Panc1 (cell line): ENCODE measurements at regions of chr3 and their contacts with region 1.

Region 1: GRCh38 chr3:182618085-182618732 is 175.1 kb upstream of the ATP11B start:
- DNase-seq: peak; percentile 10
- ATAC-seq: 0 out of 2 replicates have a peak, but pooled peaks have one; percentile 63
- H3K4me3 ChIP-seq: no peak overlapping the region
- H3K27ac ChIP-seq: no peak overlapping the region
- H3K4me1 ChIP-seq: no peaks in the 10 kb centered on the region
- H3K27me3 ChIP-seq: peaks cover 9% of the 10 kb centered on the region
- CTCF ChIP-seq: peak; percentile 68

Region 2: DNA sequence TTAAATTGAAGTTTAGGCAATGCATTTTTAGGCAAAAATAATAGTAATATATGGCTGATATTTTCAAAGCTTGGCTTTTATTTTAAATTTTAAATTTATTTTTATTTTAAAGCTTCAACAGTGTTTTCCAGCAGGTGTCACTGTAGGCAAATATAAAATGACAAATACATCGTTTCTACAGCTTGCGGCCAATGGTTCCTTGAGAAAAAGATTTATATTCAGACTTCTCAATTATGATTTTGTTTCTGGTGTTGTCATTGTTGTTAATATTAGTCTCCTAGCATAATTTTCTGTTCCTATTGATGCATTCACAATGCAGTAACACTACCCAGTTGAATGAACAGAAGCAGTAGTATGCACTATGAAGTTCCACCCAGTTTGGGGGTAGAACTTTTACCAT is 1407.9 kb before region 1 on chr3:
- CTCF ChIA-PET with region 1: no interaction called
- POLR2A ChIA-PET with region 1: no interaction called
- in situ Hi-C with region 1: no loop called
- intact Hi-C with region 1: loop called (anchors 5 kb)
- DNase-seq: no peak
- ATAC-seq: no peak
- H3K4me3 ChIP-seq: no peak overlapping the region
- H3K27ac ChIP-seq: no peak overlapping the region
- H3K4me1 ChIP-seq: no peaks in the 10 kb centered on the region
- H3K27me3 ChIP-seq: peaks cover 5% of the 10 kb centered on the region; the same call in 1 of the 2 replicates
- CTCF ChIP-seq: peak; percentile 48; the same call in 1 of the 2 replicates

Region 3: DNA sequence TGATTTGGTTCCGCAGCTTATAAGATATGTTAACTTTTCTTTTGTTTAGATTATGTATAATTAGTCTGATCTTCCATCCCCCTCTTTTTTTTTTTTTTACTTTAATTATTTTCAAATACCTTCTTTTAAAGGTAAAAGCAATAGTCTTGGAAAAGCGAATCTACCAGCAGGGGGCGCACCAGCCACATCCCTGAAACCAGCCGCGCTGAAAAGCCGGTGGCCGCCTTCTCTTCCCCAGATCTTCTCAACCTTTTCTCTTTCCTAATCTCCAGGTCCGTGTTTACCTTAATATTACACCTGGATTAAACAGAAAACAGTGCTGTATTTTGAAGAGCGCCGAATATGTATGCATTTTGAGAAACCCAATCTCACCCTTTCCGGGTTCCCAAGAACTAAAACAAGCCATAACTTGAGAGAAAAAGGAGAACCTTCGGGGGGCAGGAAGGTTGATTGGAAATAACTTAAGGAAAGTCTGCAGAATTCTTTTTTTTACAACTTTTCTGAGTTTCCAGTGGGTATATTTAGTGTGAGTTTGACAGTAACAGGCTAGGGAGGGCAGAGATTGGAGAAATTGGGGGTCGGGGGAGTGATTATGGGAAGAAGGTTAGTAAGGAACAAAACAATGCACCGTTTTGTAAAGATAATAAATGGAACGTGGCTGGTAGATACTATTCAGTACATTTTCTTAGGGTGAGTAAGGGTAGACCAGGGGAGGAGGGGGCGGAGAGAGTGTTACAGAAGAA is 908.5 kb before region 1 on chr3:
- CTCF ChIA-PET with region 1: no interaction called
- POLR2A ChIA-PET with region 1: no interaction called
- in situ Hi-C with region 1: no loop called
- intact Hi-C with region 1: loop called (anchors 2 kb)
- DNase-seq: no peak
- ATAC-seq: no peak
- H3K4me3 ChIP-seq: peak overlapping the region in 1 of 2 experiments; percentile 34; a peak in 2 of 4 replicates
- H3K27ac ChIP-seq: no peak overlapping the region
- H3K4me1 ChIP-seq: peaks cover 4% of the 10 kb centered on the region; the same call in 1 of the 2 replicates
- H3K27me3 ChIP-seq: peaks cover 40% of the 10 kb centered on the region
- CTCF ChIP-seq: peak; percentile 95

Region 4: GRCh38 chr3:182802413-182803390 is 184.5 kb after region 1 on chr3:
- CTCF ChIA-PET with region 1: no interaction called
- POLR2A ChIA-PET with region 1: no interaction called
- in situ Hi-C with region 1: no loop called
- intact Hi-C with region 1: no loop called
- DNase-seq: no peak
- ATAC-seq: peak; percentile 45; the same call in 1 of the 2 replicates
- H3K4me3 ChIP-seq: no peak overlapping the region
- H3K27ac ChIP-seq: no peak overlapping the region
- H3K4me1 ChIP-seq: peaks cover 6% of the 10 kb centered on the region
- H3K27me3 ChIP-seq: no peaks in the 10 kb centered on the region
- CTCF ChIP-seq: no peak

Region 5: GRCh38 chr3:182889948-182890629 is 271.9 kb after region 1 on chr3:
- CTCF ChIA-PET with region 1: no interaction called
- POLR2A ChIA-PET with region 1: no interaction called
- in situ Hi-C with region 1: no loop called
- intact Hi-C with region 1: no loop called
- DNase-seq: no peak
- ATAC-seq: peak; percentile 38; the same call in 1 of the 2 replicates
- H3K4me3 ChIP-seq: no peak overlapping the region
- H3K27ac ChIP-seq: no peak overlapping the region
- H3K4me1 ChIP-seq: no peaks in the 10 kb centered on the region
- H3K27me3 ChIP-seq: no peaks in the 10 kb centered on the region
- CTCF ChIP-seq: no peak